ENCODE measurements at regions of chr15 and their contacts with region 1.

Region 1: GRCh38 chr15:31215490-31216214 is 111.0 kb upstream of the KLF13 start:
- DNase-seq: peak; percentile 70 to 76 (median 72)
- H3K4me3 ChIP-seq: peak overlapping the region in 1 of 2 donors; percentile 38
- H3K4me3 Mint-ChIP-seq: peak overlapping the region; percentile 54 to 76 (median 73)
- H3K27ac ChIP-seq: peak overlapping the region; percentile 52
- H3K27ac Mint-ChIP-seq: peak overlapping the region in 6 of 7 donors; percentile 32 to 87 (median 78)
- H3K4me1 ChIP-seq: peaks cover 30% of the 10 kb centered on the region
- H3K4me1 Mint-ChIP-seq: peaks cover 18 to 34% (median 28%) of the 10 kb centered on the region in 4 donors
- H3K27me3 ChIP-seq: no peaks in the 10 kb centered on the region
- H3K27me3 Mint-ChIP-seq: no peaks in the 10 kb centered on the region

Region 2: DNA sequence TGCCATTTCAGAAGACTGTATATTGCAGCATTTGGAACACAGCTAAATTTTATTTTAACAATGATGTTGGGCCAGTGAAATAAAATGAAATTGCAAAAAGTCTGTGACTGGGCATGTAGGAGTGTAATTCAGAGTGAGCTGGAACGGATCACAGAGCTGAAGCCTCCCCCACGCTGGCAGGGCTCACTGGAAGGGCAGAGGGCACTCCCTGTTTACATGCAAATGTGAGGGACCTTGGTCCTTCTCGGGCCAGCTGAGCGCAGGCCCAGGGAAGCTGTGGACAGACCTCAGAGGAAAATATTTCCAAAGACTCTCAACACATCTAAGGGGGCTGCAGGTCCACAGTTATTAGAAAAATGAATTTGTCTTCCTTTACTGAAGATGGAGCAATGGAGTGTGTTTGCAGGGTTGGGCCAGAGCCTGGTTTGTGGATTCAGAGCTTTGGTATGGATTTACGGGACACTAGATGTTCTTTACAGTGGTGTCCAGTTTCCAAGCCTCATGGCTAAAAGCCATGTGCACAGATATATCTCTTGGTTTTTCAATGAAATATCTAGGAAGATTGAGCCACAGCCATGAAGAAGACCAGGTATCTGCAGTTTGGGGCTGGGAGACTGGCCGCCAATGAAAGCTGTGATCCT is 146.2 kb before region 1 on chr15:
- CTCF ChIA-PET with region 1: no interaction called
- POLR2A ChIA-PET with region 1: no interaction called
- intact Hi-C with region 1: no loop called
- DNase-seq: no peak
- H3K4me3 ChIP-seq: no peak overlapping the region
- H3K4me3 Mint-ChIP-seq: no peak overlapping the region
- H3K27ac ChIP-seq: no peak overlapping the region
- H3K27ac Mint-ChIP-seq: no peak overlapping the region
- H3K4me1 ChIP-seq: no peaks in the 10 kb centered on the region
- H3K4me1 Mint-ChIP-seq: no peaks in the 10 kb centered on the region
- H3K27me3 ChIP-seq: no peaks in the 10 kb centered on the region
- H3K27me3 Mint-ChIP-seq: peaks cover 4 to 5% of the 10 kb centered on the region in 2 donors

Region 3: GRCh38 chr15:31200735-31201151 is 14.9 kb before region 1 on chr15:
- CTCF ChIA-PET with region 1: interaction called, 19 read pairs
- POLR2A ChIA-PET with region 1: interaction called, 5 read pairs
- intact Hi-C with region 1: no loop called
- DNase-seq: peak; percentile 70 to 73 (median 71)
- H3K4me3 ChIP-seq: no peak overlapping the region
- H3K4me3 Mint-ChIP-seq: peak overlapping the region in 2 of 8 donors; percentile 20 to 26
- H3K27ac ChIP-seq: no peak overlapping the region
- H3K27ac Mint-ChIP-seq: peak overlapping the region in 4 of 7 donors; percentile 18 to 87 (median 38)
- H3K4me1 ChIP-seq: peaks cover 26% of the 10 kb centered on the region
- H3K4me1 Mint-ChIP-seq: peaks cover 9 to 30% (median 15%) of the 10 kb centered on the region in 4 donors
- H3K27me3 ChIP-seq: no peaks in the 10 kb centered on the region
- H3K27me3 Mint-ChIP-seq: no peaks in the 10 kb centered on the region

Region 4: DNA sequence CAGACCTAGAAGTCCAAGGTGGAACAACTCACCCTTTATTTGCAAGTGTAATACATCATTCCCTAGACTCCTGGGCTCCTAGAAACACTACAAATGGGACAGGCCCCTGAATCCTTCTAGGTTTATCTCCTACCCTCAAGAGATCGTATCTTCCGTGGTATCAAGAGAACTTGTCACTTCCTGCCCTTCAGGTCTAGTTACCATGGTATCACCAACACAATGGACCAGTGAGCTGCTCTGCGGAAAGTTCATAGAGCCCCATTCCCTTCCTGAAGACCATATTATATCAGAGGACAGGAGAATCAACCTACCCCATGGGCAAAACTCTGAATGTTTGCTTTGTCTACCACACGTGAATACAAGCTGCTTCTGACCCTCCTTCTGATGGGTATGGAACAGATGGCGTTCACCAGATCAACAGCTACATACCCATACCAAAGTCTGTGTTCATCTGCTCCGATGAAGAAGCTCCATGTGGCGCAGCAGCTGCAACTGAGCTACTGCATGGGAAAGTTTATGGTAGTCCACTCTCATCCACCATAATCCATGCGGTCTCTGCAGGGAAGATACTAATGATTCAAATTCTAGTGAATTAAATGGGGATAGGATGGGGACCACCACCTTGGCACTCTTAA is 26.4 kb after region 1 on chr15:
- CTCF ChIA-PET with region 1: interaction called, 3 read pairs
- POLR2A ChIA-PET with region 1: no interaction called
- intact Hi-C with region 1: loop called (anchors 1 kb)
- DNase-seq: peak in 4 of 5 donors; percentile 54 to 83 (median 74)
- H3K4me3 ChIP-seq: no peak overlapping the region
- H3K4me3 Mint-ChIP-seq: peak overlapping the region in 5 of 8 donors; percentile 41 to 73 (median 63)
- H3K27ac ChIP-seq: peak overlapping the region; percentile 0
- H3K27ac Mint-ChIP-seq: peak overlapping the region in 6 of 7 donors; percentile 79 to 98 (median 94)
- H3K4me1 ChIP-seq: peaks cover 29% of the 10 kb centered on the region
- H3K4me1 Mint-ChIP-seq: peaks cover 24 to 50% (median 35%) of the 10 kb centered on the region in 4 donors
- H3K27me3 ChIP-seq: no peaks in the 10 kb centered on the region
- H3K27me3 Mint-ChIP-seq: no peaks in the 10 kb centered on the region

Region 5: DNA sequence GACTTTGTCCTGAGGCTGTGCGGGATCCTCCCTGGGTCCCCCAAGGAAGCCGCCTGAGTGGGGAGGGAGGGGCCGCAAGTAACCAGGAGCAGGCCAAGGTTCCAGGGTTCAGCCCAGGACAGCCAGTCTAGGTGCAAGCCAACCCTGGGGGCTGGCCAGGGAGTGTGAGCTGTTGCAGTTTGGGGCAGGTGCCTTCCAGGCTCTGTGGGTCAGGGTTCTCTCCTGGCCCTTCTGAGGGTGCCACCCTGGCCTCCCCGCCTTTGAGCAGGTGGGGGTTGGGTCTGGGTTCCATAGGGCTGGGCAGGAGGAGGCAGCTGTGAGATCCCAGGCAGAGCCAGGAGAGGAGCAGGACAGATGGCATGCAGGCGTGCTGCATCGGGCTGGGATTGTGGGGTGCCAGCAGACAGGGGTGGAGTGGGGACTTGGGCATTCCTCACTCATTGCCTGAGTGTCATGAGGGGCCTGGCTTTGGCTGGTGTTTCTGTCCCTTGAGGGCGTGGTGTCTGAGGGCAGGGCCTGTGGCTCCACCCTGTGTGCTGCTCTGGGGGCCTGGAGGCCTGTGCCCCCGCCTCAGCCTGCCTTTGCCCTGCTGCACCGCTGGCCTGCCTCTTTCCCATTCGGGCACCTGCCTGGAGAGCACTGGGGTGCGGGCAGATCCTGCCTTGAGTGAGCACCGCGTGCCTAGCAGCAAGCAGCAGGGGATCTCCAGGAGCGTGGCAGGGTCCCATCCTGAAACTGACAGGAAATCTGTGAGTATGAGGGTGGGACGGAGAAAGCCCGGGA is 129.4 kb after region 1 on chr15:
- CTCF ChIA-PET with region 1: interaction called, 5 read pairs
- POLR2A ChIA-PET with region 1: interaction called, 8 read pairs
- intact Hi-C with region 1: loop called (anchors 5 kb)
- DNase-seq: peak in 1 of 5 donors; percentile 47
- H3K4me3 ChIP-seq: peak overlapping the region; percentile 54 to 60
- H3K4me3 Mint-ChIP-seq: peak overlapping the region; percentile 83 to 95 (median 90)
- H3K27ac ChIP-seq: peak overlapping the region; percentile 74
- H3K27ac Mint-ChIP-seq: peak overlapping the region; percentile 84 to 99 (median 98)
- H3K4me1 ChIP-seq: peaks cover 100% of the 10 kb centered on the region
- H3K4me1 Mint-ChIP-seq: peaks cover 70 to 100% (median 91%) of the 10 kb centered on the region in 4 donors
- H3K27me3 ChIP-seq: no peaks in the 10 kb centered on the region
- H3K27me3 Mint-ChIP-seq: no peaks in the 10 kb centered on the region

Region 6: DNA sequence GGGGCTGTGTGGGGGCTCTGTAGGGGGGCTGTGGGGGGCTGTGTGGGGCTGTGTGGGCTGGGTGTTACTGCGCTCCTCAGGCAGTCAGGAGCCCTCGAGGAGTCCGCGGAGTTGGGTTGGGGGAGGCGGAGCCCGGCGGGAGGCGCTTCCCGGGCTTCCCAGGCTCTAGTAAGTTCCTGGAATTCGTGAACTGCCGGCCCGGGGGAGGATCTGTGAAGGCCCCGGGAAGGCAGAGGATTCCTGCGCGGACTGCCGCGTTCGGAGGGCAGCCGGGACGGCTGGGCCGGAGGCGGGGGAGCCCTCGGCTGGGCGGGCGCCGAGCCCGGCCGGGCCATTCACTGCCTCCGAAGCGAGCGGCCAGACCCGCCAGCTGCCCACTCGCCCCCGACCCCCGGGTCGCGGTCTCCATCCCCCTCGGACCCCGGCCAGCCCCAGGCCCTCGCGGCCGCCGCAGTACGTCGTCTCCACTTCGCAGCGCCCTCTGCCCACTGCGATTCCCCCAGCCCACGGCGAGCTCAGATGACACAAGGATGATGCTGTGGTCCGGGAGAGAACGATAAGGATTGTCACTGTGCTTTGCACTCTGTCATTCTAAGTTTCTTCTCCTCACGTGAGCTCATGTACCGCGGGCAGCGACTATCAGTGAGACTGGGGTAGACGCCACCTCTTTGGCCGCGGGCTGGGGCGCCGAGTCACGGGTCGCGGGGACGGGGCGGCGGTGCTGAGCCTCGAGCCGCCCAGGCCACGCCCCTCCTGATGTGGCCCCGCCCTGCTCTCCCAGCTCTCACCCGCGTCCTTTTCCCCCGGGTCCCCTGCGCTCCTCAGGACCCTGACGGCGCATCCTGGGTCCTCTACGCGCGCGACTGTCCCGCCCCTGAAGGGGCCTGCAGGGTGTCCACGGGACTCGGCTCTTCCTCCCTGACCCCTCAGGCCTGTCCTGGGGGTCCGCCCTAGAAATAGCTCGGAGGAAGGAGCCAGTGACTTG is 176.3 kb after region 1 on chr15:
- CTCF ChIA-PET with region 1: interaction called, 5 read pairs
- POLR2A ChIA-PET with region 1: interaction called, 10 read pairs
- intact Hi-C with region 1: loop called (anchors 2 kb)
- DNase-seq: peak; percentile 78 to 87 (median 79)
- H3K4me3 ChIP-seq: peak overlapping the region; percentile 65 to 77
- H3K4me3 Mint-ChIP-seq: peak overlapping the region; percentile 87 to 96 (median 92)
- H3K27ac ChIP-seq: peak overlapping the region; percentile 57
- H3K27ac Mint-ChIP-seq: peak overlapping the region; percentile 81 to 98 (median 93)
- H3K4me1 ChIP-seq: peaks cover 28% of the 10 kb centered on the region
- H3K4me1 Mint-ChIP-seq: peaks cover 28 to 60% (median 39%) of the 10 kb centered on the region in 4 donors
- H3K27me3 ChIP-seq: no peaks in the 10 kb centered on the region
- H3K27me3 Mint-ChIP-seq: no peaks in the 10 kb centered on the region

Region 7: DNA sequence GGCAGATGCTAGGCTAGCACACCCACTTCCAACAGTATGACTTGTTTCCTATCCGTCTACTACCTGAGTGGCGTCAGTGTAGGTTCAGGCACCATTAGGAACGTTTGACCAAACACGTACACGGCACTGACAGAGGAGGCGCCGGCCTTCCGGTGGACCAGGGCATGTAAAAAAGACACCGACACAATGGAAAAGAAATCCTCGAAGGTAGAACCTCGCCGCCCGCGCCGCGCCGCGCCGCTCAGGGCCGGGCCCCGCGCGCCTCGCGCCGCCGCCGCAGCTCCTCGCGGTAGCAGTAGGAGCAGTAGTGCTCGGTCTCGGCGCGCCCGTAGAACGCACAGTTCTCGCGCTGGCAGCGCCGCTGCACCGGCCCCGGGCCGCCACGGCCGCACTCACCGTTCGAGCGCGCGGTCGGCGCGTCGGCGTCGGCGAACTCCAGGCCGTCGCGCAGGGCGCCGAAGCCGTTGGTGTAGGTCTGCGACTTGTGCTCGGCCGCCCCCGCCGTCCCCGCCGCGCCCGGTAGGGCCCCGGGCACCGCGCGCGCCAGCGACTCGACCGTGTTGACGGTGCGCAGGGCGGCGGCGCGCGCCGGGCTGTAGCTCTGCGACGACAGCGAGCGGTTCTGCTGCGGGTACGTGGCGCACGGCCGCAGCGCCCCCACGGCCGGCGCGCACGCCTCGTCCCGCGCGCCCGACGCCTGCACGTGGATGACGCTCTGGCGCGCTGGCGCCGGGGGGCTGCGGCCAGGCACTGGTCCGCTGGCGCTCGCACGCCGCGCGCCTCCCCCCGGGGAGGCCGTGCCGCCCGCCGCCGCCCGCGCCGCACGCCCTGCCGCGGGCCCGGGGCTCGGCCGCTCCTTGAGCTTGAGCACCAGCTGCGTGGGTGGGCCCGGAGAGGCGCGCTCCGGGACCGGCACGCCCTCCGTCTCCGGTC is 267.7 kb after region 1 on chr15:
- CTCF ChIA-PET with region 1: interaction called, 70 read pairs
- POLR2A ChIA-PET with region 1: interaction called, 27 read pairs
- intact Hi-C with region 1: loop called (anchors 1 kb)
- DNase-seq: peak; percentile 48 to 64 (median 56)
- H3K4me3 ChIP-seq: peak overlapping the region in 1 of 2 donors; percentile 29
- H3K4me3 Mint-ChIP-seq: peak overlapping the region; percentile 91 to 96 (median 96)
- H3K27ac ChIP-seq: no peak overlapping the region
- H3K27ac Mint-ChIP-seq: peak overlapping the region; percentile 75 to 97 (median 92)
- H3K4me1 ChIP-seq: peaks cover 46% of the 10 kb centered on the region
- H3K4me1 Mint-ChIP-seq: peaks cover 21 to 69% (median 39%) of the 10 kb centered on the region in 4 donors
- H3K27me3 ChIP-seq: no peaks in the 10 kb centered on the region
- H3K27me3 Mint-ChIP-seq: no peaks in the 10 kb centered on the region

Measured in CD4-positive, alpha-beta memory T cell (primary cell).